ENCODE measurements at regions of chr16 and their contacts with region 1.

Region 1: DNA sequence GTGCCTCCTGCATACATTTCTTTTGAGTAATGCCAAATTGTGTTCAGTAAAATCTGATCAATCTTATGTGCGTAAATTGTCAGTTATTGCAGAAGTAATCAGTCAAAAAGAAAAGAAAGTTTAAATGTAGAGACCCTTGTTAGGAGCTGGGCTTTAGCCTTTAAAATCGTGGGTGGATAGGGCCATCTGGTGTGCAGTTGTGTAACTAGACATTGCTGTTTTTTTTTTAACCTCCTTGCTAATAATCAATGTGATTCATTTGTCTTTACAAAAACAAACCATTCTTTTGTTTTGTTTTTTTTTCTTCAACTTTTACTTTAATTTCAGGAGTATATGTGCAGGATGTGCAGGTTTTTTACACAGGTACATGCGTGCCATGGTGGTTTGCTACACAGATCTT is 5.3 kb upstream of the WWOX start:
- DNase-seq: no peak
- ATAC-seq: no peak
- H3K4me3 ChIP-seq: no peak overlapping the region
- H3K27ac ChIP-seq: no peak overlapping the region
- H3K4me1 ChIP-seq: peaks cover 6% of the 10 kb centered on the region; the same call in 1 of the 2 replicates
- H3K27me3 ChIP-seq: no peaks in the 10 kb centered on the region; a peak in 1 of 4 replicates
- CTCF ChIP-seq: 0 out of 6 replicates have a peak, but pooled peaks of 1 of the 3 experiments have one; percentile 9
- EP300 ChIP-seq: no peak
- POLR2A ChIP-seq: no peak
- RAD21 ChIP-seq: peak; percentile 31; the same call in 1 of the 2 replicates

Region 2: GRCh38 chr16:78002915-78003538 is 91.1 kb before region 1 on chr16:
- CTCF ChIA-PET with region 1: interaction called, 12 read pairs
- POLR2A ChIA-PET with region 1: no interaction called
- RAD21 ChIA-PET with region 1: interaction called, 3 read pairs
- SMC1A ChIA-PET with region 1: interaction called, 6 read pairs
- in situ Hi-C with region 1: no loop called
- intact Hi-C with region 1: loop called (anchors 2 kb)
- DNase-seq: peak; percentile 51
- ATAC-seq: peak; percentile 97
- H3K4me3 ChIP-seq: no peak overlapping the region
- H3K27ac ChIP-seq: no peak overlapping the region
- H3K4me1 ChIP-seq: no peaks in the 10 kb centered on the region
- H3K27me3 ChIP-seq: no peaks in the 10 kb centered on the region
- CTCF ChIP-seq: peak; percentile 85 to 97 (median 90)
- EP300 ChIP-seq: no peak
- POLR2A ChIP-seq: no peak
- RAD21 ChIP-seq: peak; percentile 84